Activated naive CD4-positive, alpha-beta T cell treated with anti-CD3 and anti-CD28 coated beads, Interleukin-2, amount 10 ng/mL, durations not matched to agents 7 days and 5 days (primary cell): ENCODE measurements at regions of chr2 and their contacts with region 1.

Region 1: DNA sequence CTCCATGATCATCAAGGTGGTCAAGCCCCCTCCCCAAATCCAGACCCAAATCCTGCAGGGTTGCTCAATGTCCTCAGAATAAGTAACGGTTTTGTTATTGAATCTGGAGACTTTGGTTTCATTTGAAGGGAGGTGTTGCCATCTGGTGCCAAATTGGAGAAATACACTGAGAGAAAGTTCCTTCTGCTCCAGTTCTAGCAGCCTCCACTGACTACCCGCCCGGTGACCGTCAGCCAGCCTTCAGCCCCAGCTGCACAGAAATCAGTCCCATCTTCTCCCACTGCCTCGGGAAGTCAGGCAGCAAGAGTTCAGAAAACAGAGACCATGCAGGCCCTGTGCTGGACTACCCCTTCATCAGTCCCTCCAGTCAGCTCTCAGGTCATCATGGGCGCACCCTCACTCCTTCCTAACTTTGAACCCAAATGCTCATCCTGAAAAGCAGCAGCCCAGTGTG is 38.7 kb downstream of the PKDCC start:
- DNase-seq: peak; percentile 54
- H3K4me3 Mint-ChIP-seq: no peak overlapping the region
- H3K27ac Mint-ChIP-seq: no peak overlapping the region
- H3K4me1 Mint-ChIP-seq: peaks cover 8% of the 10 kb centered on the region
- H3K27me3 Mint-ChIP-seq: peaks cover 33% of the 10 kb centered on the region

Region 2: DNA sequence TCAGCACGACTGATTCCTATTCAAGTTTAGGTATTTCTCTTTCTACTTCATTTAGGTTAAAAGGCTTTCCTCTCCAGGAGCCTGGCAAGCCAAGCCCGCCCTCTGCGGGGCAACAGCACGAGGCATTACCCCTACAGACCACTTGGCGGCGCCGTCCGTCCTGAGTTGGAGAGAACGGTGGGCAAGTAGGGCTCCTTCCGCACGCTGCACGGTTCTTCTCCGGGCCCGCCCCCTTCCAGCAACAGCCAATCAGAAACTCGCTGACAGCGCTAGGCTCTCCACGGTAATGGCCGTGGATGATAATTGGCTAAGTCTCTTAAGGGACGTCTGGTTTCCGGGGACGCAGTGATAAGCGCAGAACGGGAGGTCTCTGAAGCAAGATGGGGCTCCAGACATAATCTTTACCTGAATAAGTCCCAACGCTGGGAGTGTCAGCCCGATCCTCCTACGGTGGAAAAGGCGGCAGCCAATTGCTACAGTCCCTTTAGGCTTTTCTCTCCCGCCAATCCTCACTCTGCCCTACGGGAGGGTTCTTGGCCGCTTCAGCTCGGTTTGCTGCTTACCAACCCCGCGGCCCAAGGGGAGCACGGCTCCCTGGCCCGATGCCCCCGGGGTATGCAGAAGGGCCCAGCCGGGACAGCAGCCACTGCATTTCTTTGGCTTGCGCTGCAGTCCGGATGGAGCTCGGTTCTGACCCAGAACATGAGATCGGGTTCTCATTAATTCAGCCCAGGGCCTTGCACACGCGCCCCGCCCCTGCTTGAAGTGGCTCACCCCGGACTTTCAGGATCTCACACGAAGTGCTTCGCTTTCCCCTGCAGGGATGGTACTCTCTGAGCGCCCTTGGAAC is 245.6 kb before region 1 on chr2:
- CTCF ChIA-PET with region 1: interaction called, 45 read pairs
- DNase-seq: peak; percentile 98
- H3K4me3 Mint-ChIP-seq: peak overlapping the region; percentile 95
- H3K27ac Mint-ChIP-seq: peak overlapping the region; percentile 87
- H3K4me1 Mint-ChIP-seq: peaks cover 17% of the 10 kb centered on the region
- H3K27me3 Mint-ChIP-seq: peaks cover 20% of the 10 kb centered on the region

Region 3: GRCh38 chr2:41853427-41854216 is 232.9 kb before region 1 on chr2:
- CTCF ChIA-PET with region 1: interaction called, 65 read pairs
- DNase-seq: peak; percentile 34
- H3K4me3 Mint-ChIP-seq: no peak overlapping the region
- H3K27ac Mint-ChIP-seq: no peak overlapping the region
- H3K4me1 Mint-ChIP-seq: no peaks in the 10 kb centered on the region
- H3K27me3 Mint-ChIP-seq: peaks cover 26% of the 10 kb centered on the region

Region 4: GRCh38 chr2:41869542-41870264 is 216.8 kb before region 1 on chr2:
- CTCF ChIA-PET with region 1: interaction called, 261 read pairs
- DNase-seq: peak; percentile 79
- H3K4me3 Mint-ChIP-seq: no peak overlapping the region
- H3K27ac Mint-ChIP-seq: no peak overlapping the region
- H3K4me1 Mint-ChIP-seq: peaks cover 2% of the 10 kb centered on the region
- H3K27me3 Mint-ChIP-seq: peaks cover 46% of the 10 kb centered on the region

Region 5: GRCh38 chr2:42074661-42075060 is 11.9 kb before region 1 on chr2:
- CTCF ChIA-PET with region 1: interaction called, 10 read pairs
- DNase-seq: no peak
- H3K4me3 Mint-ChIP-seq: no peak overlapping the region
- H3K27ac Mint-ChIP-seq: no peak overlapping the region
- H3K4me1 Mint-ChIP-seq: no peaks in the 10 kb centered on the region
- H3K27me3 Mint-ChIP-seq: peaks cover 35% of the 10 kb centered on the region

Region 6: DNA sequence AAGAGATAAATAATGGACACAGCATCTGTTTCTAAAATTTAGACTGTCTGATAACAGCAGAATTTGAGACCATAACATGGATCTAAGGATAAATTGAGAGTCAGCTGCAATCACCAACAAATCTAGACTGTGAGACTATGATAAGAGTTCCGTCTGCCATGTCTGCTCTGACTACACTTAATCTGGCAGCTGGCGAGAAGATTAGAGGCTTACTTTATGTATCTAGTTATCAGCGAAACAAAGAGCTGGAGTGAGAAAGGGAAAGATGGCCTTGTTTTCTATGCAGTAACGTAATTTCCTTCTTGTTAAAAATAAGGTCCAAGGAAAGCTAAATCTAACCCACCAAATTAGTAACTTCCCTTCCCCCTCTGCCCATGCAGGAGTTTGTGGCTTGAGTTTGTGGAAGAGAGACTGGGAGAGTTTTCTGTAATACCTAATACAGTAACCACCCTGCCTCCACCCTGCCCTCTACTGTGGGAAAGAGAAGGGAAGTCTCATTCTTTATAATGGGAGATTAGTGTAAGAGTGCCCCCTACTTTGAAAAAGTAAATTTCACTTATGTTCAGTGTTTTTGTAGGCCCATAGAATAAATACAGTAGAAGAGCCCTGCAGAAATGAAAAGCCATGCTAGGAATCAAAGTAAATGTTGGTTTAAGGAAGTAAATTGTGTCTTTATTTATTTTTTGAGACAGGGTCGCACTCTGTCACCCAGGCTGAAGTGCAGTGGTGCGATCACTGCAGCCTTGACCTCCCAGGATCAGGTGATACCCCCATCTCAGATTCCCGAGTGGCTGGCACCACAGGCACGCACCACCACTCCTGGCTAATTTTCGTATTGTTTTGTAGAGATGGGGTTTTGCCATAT is 110.1 kb after region 1 on chr2:
- CTCF ChIA-PET with region 1: interaction called, 22 read pairs
- DNase-seq: peak; percentile 57
- H3K4me3 Mint-ChIP-seq: no peak overlapping the region
- H3K27ac Mint-ChIP-seq: peak overlapping the region; percentile 69
- H3K4me1 Mint-ChIP-seq: peaks cover 64% of the 10 kb centered on the region
- H3K27me3 Mint-ChIP-seq: no peaks in the 10 kb centered on the region

Region 7: DNA sequence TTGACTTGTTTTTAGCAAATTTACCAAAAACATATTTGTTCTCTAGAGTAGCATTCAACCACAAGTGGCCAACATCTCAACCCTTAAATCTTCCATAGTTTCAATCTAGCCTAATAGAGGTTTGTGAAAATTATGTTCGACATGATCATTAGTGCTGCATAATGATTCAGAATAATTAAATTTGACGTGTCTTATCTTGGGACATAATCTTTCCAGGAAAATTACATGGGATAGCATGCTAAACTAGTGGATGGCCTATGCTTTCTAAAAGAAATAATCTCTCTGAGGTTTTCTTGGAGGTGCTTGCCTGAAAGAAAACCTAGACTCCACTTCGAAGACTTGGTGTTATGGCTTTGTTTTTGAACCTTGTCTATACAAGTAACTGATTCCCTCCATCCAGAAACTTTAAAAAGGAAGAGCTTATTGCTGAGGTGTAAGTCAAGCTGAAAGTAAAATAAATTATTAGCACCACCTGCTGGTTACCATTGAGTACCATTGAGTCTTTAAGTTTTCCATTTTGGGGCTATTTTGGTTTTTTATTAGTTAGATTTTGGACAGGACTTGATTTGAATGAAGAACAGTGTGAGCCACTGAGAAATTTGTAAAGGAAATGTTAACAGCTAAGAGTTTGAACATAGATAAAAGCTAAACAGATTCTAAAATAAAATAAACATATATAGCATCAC is 241.8 kb after region 1 on chr2:
- CTCF ChIA-PET with region 1: interaction called, 26 read pairs
- DNase-seq: no peak
- H3K4me3 Mint-ChIP-seq: no peak overlapping the region
- H3K27ac Mint-ChIP-seq: no peak overlapping the region
- H3K4me1 Mint-ChIP-seq: peaks cover 3% of the 10 kb centered on the region
- H3K27me3 Mint-ChIP-seq: no peaks in the 10 kb centered on the region